ENCODE measurements at regions of chr10 and their contacts with region 1.

Region 1: DNA sequence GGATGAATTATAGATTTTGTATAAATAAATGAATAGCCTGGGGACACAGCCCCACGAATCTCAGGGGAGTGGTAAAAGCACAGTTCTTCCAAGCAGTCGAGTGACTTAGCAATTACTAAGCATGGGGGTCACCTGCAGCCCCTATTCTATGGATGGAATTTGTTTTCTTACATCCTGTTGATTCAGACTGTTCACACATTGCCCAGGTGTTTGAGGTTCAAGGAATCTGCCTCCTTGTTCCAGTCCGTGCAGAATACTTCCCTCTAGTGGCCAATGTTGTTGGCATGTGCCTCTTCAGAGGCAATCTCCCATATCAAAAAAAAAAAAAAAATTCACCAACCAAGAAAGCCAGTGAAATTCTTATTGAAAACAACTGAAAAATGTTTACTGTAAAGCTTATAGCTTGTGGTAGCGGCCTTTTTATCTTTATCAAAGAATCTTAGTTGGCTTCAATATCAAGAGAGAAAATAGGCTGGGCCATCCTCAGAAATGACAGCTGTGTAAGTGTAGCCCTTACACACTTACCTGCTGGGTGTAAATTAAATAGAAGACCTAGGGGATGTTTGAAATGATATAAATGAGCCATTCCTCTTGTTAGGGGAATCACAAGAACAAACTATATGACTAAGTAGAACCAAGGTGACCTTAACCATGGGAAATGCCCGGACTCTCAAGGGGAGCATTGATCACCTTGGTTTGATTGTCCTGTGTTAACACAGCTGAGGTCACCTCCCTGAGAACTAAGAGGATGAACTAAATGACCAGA is 7.8 kb downstream of the LIPM start:
- DNase-seq: peak in 5 of 9 experiments; percentile 20 to 77 (median 35)
- ATAC-seq: peak; percentile 73
- H3K4me3 ChIP-seq: no peak overlapping the region
- H3K4me3 Mint-ChIP-seq: no peak overlapping the region
- H3K27ac ChIP-seq: no peak overlapping the region
- H3K27ac Mint-ChIP-seq: no peak overlapping the region
- H3K4me1 ChIP-seq: peaks cover 6% of the 10 kb centered on the region
- H3K4me1 Mint-ChIP-seq: peaks cover 17% of the 10 kb centered on the region
- H3K27me3 ChIP-seq: no peaks in the 10 kb centered on the region
- H3K27me3 Mint-ChIP-seq: no peaks in the 10 kb centered on the region
- CTCF ChIP-seq: peak; percentile 66

Region 2: GRCh38 chr10:87659571-87660483 is 1150.6 kb before region 1 on chr10 and contains the start of gene PAPSS2:
- CTCF ChIA-PET with region 1: no interaction called
- POLR2A ChIA-PET with region 1: no interaction called
- intact Hi-C with region 1: loop called in 1 of 2 experiments (anchors 5 kb)
- DNase-seq: peak in 3 of 9 experiments; percentile 8 to 22 (median 20)
- ATAC-seq: peak; percentile 36
- H3K4me3 ChIP-seq: peak within 1 kb of the TSS; percentile 41 to 48
- H3K4me3 Mint-ChIP-seq: peak within 1 kb of the TSS; percentile 79
- H3K27ac ChIP-seq: no peak within 1 kb of the TSS
- H3K27ac Mint-ChIP-seq: no peak within 1 kb of the TSS
- H3K4me1 ChIP-seq: peaks cover 6% of the 10 kb centered on the region
- H3K4me1 Mint-ChIP-seq: peaks cover 11% of the 10 kb centered on the region
- H3K27me3 ChIP-seq: peaks cover 8 to 14% of the 10 kb centered on the region in 2 experiments
- H3K27me3 Mint-ChIP-seq: peaks cover 53% of the 10 kb centered on the region
- CTCF ChIP-seq: no peak
- total RNA-seq, gene PAPSS2: not detected

Region 3: DNA sequence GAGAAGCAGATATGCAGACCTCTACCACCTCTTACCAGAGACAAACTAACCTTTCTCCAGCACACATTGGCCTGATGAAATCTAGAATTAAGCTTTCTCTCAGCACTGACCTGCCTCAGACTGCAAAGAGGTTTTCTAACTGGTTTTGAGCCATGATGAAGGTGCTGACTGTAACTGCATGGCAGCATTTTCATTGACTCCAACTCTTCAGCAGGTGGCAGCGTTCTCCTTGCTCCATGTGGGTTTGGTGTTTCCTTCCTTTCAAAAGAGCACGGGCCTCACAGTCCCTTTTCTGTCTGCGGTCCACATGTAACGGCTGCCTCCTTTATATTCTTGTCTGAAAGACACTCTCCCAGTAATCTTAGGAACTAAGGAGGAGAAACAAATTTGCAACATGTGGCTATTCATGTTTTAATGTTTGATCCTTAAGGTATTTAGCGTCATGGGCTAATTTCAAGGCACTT is 959.6 kb before region 1 on chr10:
- CTCF ChIA-PET with region 1: no interaction called
- POLR2A ChIA-PET with region 1: no interaction called
- intact Hi-C with region 1: loop called in 1 of 2 experiments (anchors 10 kb)
- DNase-seq: peak; percentile 2 to 76 (median 51)
- ATAC-seq: peak; percentile 90
- H3K4me3 ChIP-seq: no peak overlapping the region
- H3K4me3 Mint-ChIP-seq: no peak overlapping the region
- H3K27ac ChIP-seq: no peak overlapping the region
- H3K27ac Mint-ChIP-seq: no peak overlapping the region
- H3K4me1 ChIP-seq: no peaks in the 10 kb centered on the region
- H3K4me1 Mint-ChIP-seq: peaks cover 19% of the 10 kb centered on the region
- H3K27me3 ChIP-seq: no peaks in the 10 kb centered on the region
- H3K27me3 Mint-ChIP-seq: no peaks in the 10 kb centered on the region
- CTCF ChIP-seq: peak; percentile 62

Region 4: DNA sequence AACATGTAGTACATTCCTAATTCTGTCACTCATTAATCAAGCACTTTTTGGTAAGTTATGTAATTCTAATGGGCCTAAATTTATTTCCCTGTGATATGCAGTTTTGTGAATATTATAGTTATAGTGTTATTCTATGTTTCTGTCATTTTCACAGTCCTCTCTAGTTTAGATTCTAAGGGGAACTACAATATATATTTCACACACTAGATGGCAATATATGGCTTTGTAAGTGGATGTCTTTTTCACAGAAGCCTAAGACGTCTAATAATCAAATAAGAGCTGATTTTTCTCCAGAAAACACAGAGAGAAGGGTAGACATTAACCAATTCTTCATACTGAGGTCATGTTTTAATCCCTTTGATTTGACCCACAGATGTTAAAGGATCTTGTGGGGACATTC is 245.3 kb before region 1 on chr10:
- CTCF ChIA-PET with region 1: no interaction called
- POLR2A ChIA-PET with region 1: no interaction called
- intact Hi-C with region 1: loop called in 1 of 2 experiments (anchors 1 kb)
- DNase-seq: peak in 2 of 9 experiments; percentile 17 to 29
- ATAC-seq: no peak
- H3K4me3 ChIP-seq: no peak overlapping the region
- H3K4me3 Mint-ChIP-seq: no peak overlapping the region
- H3K27ac ChIP-seq: no peak overlapping the region
- H3K27ac Mint-ChIP-seq: no peak overlapping the region
- H3K4me1 ChIP-seq: no peaks in the 10 kb centered on the region
- H3K4me1 Mint-ChIP-seq: peaks cover 4% of the 10 kb centered on the region
- H3K27me3 ChIP-seq: no peaks in the 10 kb centered on the region
- H3K27me3 Mint-ChIP-seq: no peaks in the 10 kb centered on the region
- CTCF ChIP-seq: peak; percentile 31

Region 5: DNA sequence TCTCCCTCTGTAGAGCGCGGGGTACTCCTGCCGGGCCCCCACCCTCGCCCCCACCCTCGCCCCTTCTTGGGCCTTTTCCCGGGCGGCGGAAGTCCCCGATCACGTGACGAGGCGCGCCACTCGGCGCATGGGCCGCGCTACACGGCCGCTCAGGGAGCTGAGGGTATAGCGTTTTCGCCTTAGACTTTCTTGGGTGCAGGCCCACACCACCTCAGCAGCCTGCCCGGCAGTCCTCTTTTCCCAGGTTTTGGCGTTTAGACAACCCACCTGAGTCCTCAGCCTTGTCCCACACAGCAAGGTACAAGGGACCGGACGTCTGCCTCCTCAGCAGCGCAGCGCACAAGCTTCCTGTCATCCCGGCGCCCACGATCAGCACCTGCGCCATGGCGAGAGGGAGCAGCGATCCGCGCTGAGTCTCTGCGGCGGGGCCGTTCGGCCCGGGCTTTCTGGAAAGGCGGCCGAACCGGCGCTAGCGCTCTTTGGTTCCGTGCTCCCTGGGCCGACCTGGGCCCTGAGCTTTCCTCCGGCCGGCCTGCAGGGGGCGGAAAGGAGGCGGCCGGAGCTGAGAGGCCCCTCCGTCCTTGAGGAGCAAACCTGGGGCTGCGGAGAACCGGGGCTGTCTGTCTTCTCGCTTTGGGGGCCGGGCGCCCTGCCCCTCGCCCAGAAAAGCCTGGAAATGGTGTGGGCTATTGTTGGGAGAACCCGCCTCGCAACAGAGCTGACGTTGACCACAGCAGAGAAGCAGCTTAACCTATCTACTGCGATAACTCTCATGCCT is 227.4 kb before region 1 on chr10 and contains the start of gene RNLS:
- CTCF ChIA-PET with region 1: no interaction called
- POLR2A ChIA-PET with region 1: no interaction called
- intact Hi-C with region 1: loop called (anchors 5 kb)
- DNase-seq: peak; percentile 21 to 84 (median 65)
- ATAC-seq: peak; percentile 83
- H3K4me3 ChIP-seq: peak within 1 kb of the TSS; percentile 83
- H3K4me3 Mint-ChIP-seq: peak within 1 kb of the TSS; percentile 91
- H3K27ac ChIP-seq: peak within 1 kb of the TSS; percentile 72 to 83
- H3K27ac Mint-ChIP-seq: peak within 1 kb of the TSS; percentile 92
- H3K4me1 ChIP-seq: peaks cover 7% of the 10 kb centered on the region
- H3K4me1 Mint-ChIP-seq: peaks cover 11% of the 10 kb centered on the region
- H3K27me3 ChIP-seq: no peaks in the 10 kb centered on the region
- H3K27me3 Mint-ChIP-seq: peaks cover 3% of the 10 kb centered on the region
- CTCF ChIP-seq: peak; percentile 61
- total RNA-seq, gene RNLS: 1.6 to 1.7 TPM

Region 6: GRCh38 chr10:88687853-88688467 is 122.4 kb before region 1 on chr10:
- CTCF ChIA-PET with region 1: interaction called, 12 read pairs
- POLR2A ChIA-PET with region 1: no interaction called
- intact Hi-C with region 1: loop called in 1 of 2 experiments (anchors 1 kb)
- DNase-seq: peak in 2 of 9 experiments; percentile 24 to 43
- ATAC-seq: no peak
- H3K4me3 ChIP-seq: no peak overlapping the region
- H3K4me3 Mint-ChIP-seq: no peak overlapping the region
- H3K27ac ChIP-seq: no peak overlapping the region
- H3K27ac Mint-ChIP-seq: no peak overlapping the region
- H3K4me1 ChIP-seq: no peaks in the 10 kb centered on the region
- H3K4me1 Mint-ChIP-seq: no peaks in the 10 kb centered on the region
- H3K27me3 ChIP-seq: no peaks in the 10 kb centered on the region
- H3K27me3 Mint-ChIP-seq: peaks cover 3% of the 10 kb centered on the region
- CTCF ChIP-seq: peak; percentile 96

Region 7: GRCh38 chr10:88820748-88821389 is 10.5 kb after region 1 on chr10:
- CTCF ChIA-PET with region 1: interaction called, 10 read pairs
- POLR2A ChIA-PET with region 1: no interaction called
- intact Hi-C with region 1: loop called in 1 of 2 experiments (anchors 2 kb)
- DNase-seq: no peak
- ATAC-seq: no peak
- H3K4me3 ChIP-seq: no peak overlapping the region
- H3K4me3 Mint-ChIP-seq: no peak overlapping the region
- H3K27ac ChIP-seq: no peak overlapping the region
- H3K27ac Mint-ChIP-seq: no peak overlapping the region
- H3K4me1 ChIP-seq: peaks cover 15% of the 10 kb centered on the region
- H3K4me1 Mint-ChIP-seq: peaks cover 43% of the 10 kb centered on the region
- H3K27me3 ChIP-seq: no peaks in the 10 kb centered on the region
- H3K27me3 Mint-ChIP-seq: no peaks in the 10 kb centered on the region
- CTCF ChIP-seq: no peak